Caco-2 (cell line): ENCODE measurements at regions of chr14 and their contacts with region 1.

Region 1: GRCh38 chr14:92538412-92538985 is 24.9 kb downstream of the RIN3 start:
- DNase-seq: no peak
- H3K4me3 ChIP-seq: no peak overlapping the region
- H3K4me3 Mint-ChIP-seq: no peak overlapping the region
- H3K27ac Mint-ChIP-seq: no peak overlapping the region
- H3K4me1 ChIP-seq: peaks cover 27% of the 10 kb centered on the region
- H3K4me1 Mint-ChIP-seq: peaks cover 11% of the 10 kb centered on the region
- H3K27me3 ChIP-seq: no peaks in the 10 kb centered on the region
- H3K27me3 Mint-ChIP-seq: no peaks in the 10 kb centered on the region
- CTCF ChIP-seq: no peak

Region 2: DNA sequence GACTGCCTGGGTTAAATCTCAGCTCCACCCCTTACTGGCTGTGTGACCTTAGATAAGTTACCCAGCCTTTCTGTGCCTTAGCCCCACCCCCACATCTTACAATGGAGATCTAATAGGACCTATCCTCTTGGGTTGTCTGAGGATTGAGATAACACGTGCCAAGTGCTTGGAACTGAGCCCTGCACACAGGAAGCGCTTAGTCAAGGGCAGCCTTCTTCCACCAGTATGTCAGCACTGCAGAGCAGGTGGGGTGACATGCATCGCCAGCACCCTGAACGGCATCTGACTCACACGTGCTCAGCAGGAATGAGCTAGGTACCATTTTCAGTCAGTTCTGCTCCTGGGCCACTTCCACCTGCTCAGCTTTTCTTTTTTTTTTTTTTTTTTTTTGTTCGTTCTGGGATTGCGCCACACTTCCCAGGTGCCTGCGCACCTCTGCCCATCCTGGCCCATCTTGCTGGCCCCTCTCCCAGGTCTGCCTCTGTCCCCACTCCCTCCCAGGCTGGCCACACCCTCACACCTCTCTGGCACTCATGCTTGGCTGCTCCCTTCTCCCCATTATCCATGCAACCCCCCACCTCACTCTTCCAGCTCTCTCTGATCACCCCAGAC is 190.4 kb after region 1 on chr14:
- CTCF ChIA-PET with region 1: no interaction called
- POLR2A ChIA-PET with region 1: interaction called, 10 read pairs
- intact Hi-C with region 1: no loop called
- DNase-seq: no peak
- H3K4me3 ChIP-seq: no peak overlapping the region
- H3K4me3 Mint-ChIP-seq: no peak overlapping the region
- H3K27ac Mint-ChIP-seq: no peak overlapping the region
- H3K4me1 ChIP-seq: peaks cover 36% of the 10 kb centered on the region
- H3K4me1 Mint-ChIP-seq: peaks cover 25% of the 10 kb centered on the region
- H3K27me3 ChIP-seq: no peaks in the 10 kb centered on the region
- H3K27me3 Mint-ChIP-seq: no peaks in the 10 kb centered on the region
- CTCF ChIP-seq: no peak